Activated CD4-positive, alpha-beta T cell treated with anti-CD3 and anti-CD28 coated beads, Interleukin-2, amount 10 ng/mL, durations not matched to agents 7 days and 5 days (primary cell): ENCODE measurements at regions of chr15 and their contacts with region 1.

Region 1: GRCh38 chr15:89171136-89172072 is 50.0 kb downstream of the RLBP1 start:
- DNase-seq: peak; percentile 24
- H3K4me3 Mint-ChIP-seq: no peak overlapping the region
- H3K27ac Mint-ChIP-seq: peak overlapping the region; percentile 43
- H3K4me1 Mint-ChIP-seq: peaks cover 11% of the 10 kb centered on the region
- H3K27me3 Mint-ChIP-seq: no peaks in the 10 kb centered on the region

Region 2: DNA sequence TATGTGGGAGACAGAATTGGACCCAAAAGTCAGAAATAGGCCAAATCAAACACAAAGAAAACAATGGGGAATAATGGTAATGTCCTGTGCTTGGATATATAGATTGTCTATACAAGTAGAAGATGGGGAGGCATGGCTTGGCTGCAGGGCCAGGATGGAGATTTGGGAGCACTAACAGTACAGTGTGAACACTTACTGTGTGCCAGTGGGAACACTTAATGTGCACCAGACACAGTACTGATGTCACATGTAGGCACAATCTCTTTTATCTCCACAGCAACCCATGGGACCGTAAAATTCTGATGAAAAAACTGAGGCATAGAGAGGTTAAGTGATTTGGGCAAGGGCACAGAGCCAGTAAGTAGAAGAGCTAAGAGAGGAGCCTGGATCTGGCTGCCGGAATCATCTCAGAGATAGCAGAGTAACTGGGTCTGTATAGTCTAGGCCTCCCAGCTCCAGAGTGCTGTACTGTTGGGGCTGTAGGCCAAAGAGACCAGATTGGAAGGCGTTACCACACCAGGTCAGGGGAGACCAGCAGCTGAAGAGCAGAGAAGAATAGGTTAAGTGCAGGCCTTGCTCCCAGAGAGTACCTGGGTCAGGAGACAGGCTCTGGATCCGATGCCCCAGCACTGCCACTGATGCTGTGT is 13.4 kb before region 1 on chr15:
- CTCF ChIA-PET with region 1: interaction called, 10 read pairs
- POLR2A ChIA-PET with region 1: no interaction called
- DNase-seq: no peak
- H3K4me3 Mint-ChIP-seq: no peak overlapping the region
- H3K27ac Mint-ChIP-seq: peak overlapping the region; percentile 13
- H3K4me1 Mint-ChIP-seq: peaks cover 1% of the 10 kb centered on the region
- H3K27me3 Mint-ChIP-seq: no peaks in the 10 kb centered on the region